ENCODE measurements at regions of chr5 and their contacts with region 1.

Region 1: GRCh38 chr5:172549696-172550095 is 91.4 kb upstream of the NEURL1B start:
- DNase-seq: no peak

Region 2: GRCh38 chr5:172144291-172144815 is 405.3 kb before region 1 on chr5:
- intact Hi-C with region 1: no loop called
- DNase-seq: peak; percentile 65

Region 3: GRCh38 chr5:172479044-172479783 is 70.5 kb before region 1 on chr5:
- intact Hi-C with region 1: loop called in 1 of 2 experiments (anchors 5 kb)
- DNase-seq: peak; percentile 95

Measured in posterior vena cava (tissue), 2 donors.